GM12878 (cell line): ENCODE measurements at regions of chr1 and their contacts with region 1.

Region 1: GRCh38 chr1:11707621-11708276 is 16.2 kb downstream of the DRAXIN start:
- DNase-seq: no peak
- ATAC-seq: peak; percentile 33
- H3K4me3 ChIP-seq: no peak overlapping the region
- H3K27ac ChIP-seq: no peak overlapping the region
- H3K4me1 ChIP-seq: no peaks in the 10 kb centered on the region; the same call in 1 of the 2 replicates
- H3K27me3 ChIP-seq: peaks cover 2 to 7% of the 10 kb centered on the region in 2 experiments
- CTCF ChIP-seq: no peak
- EP300 ChIP-seq: no peak
- POLR2A ChIP-seq: no peak
- RAD21 ChIP-seq: no peak

Region 2: GRCh38 chr1:11681071-11681771 is 26.5 kb before region 1 on chr1 and contains the start of gene MAD2L2:
- CTCF ChIA-PET with region 1: interaction called, 4 read pairs
- POLR2A ChIA-PET with region 1: interaction called, 3 read pairs
- RAD21 ChIA-PET with region 1: interaction called, 4 read pairs
- SMC1A ChIA-PET with region 1: interaction called, 4 read pairs
- in situ Hi-C with region 1: no loop called
- intact Hi-C with region 1: loop called (anchors 1 kb)
- DNase-seq: peak; percentile 28
- ATAC-seq: peak; percentile 97
- H3K4me3 ChIP-seq: peak within 1 kb of the TSS; percentile 93
- H3K27ac ChIP-seq: peak within 1 kb of the TSS; percentile 70
- H3K4me1 ChIP-seq: no peaks in the 10 kb centered on the region
- H3K27me3 ChIP-seq: no peaks in the 10 kb centered on the region
- CTCF ChIP-seq: no peak
- EP300 ChIP-seq: no peak
- POLR2A ChIP-seq: peak; percentile 88
- RAD21 ChIP-seq: no peak
- polyA plus RNA-seq, gene MAD2L2: 3.5 to 8.0 TPM